ENCODE measurements at regions of chr16 and their contacts with region 1.

Region 1: GRCh38 chr16:85330694-85331188 is 218.5 kb upstream of the CIBAR2 start:
- DNase-seq: peak; percentile 80
- H3K4me3 ChIP-seq: no peak overlapping the region
- CTCF ChIP-seq: peak; percentile 64

Region 2: GRCh38 chr16:85262558-85263238 is 68.0 kb before region 1 on chr16:
- in situ Hi-C with region 1: loop called (anchors 5 kb)
- DNase-seq: no peak
- H3K4me3 ChIP-seq: no peak overlapping the region
- CTCF ChIP-seq: no peak